ENCODE measurements at regions of chr11 and their contacts with region 1.

Region 1: GRCh38 chr11:72793425-72794367 is at the start of gene STARD10:
- DNase-seq: peak; percentile 97
- H3K4me3 ChIP-seq: peak within 1 kb of the TSS; percentile 44 to 68 (median 64)
- H3K27ac ChIP-seq: peak within 1 kb of the TSS; percentile 88 to 95 (median 90)
- H3K4me1 ChIP-seq: peaks cover 0 to 23% (median 19%) of the 10 kb centered on the region in 4 donors
- H3K27me3 ChIP-seq: no peaks in the 10 kb centered on the region
- CTCF ChIP-seq: peak; percentile 91 to 100 (median 100)
- EP300 ChIP-seq: peak in 1 of 4 donors; percentile 82
- POLR2A ChIP-seq: peak in 1 of 2 donors; percentile 7
- total RNA-seq, gene STARD10: 29.9 to 60.1 (median 43.9) TPM

Region 2: GRCh38 chr11:72585762-72586311 is 207.9 kb before region 1 on chr11:
- intact Hi-C with region 1: loop called (anchors 10 kb)
- DNase-seq: peak; percentile 85
- H3K4me3 ChIP-seq: no peak overlapping the region
- H3K27ac ChIP-seq: no peak overlapping the region
- H3K4me1 ChIP-seq: peaks cover 0 to 17% (median 8%) of the 10 kb centered on the region in 4 donors
- H3K27me3 ChIP-seq: no peaks in the 10 kb centered on the region
- CTCF ChIP-seq: peak; percentile 87 to 94 (median 90)
- EP300 ChIP-seq: no peak
- POLR2A ChIP-seq: no peak

Region 3: DNA sequence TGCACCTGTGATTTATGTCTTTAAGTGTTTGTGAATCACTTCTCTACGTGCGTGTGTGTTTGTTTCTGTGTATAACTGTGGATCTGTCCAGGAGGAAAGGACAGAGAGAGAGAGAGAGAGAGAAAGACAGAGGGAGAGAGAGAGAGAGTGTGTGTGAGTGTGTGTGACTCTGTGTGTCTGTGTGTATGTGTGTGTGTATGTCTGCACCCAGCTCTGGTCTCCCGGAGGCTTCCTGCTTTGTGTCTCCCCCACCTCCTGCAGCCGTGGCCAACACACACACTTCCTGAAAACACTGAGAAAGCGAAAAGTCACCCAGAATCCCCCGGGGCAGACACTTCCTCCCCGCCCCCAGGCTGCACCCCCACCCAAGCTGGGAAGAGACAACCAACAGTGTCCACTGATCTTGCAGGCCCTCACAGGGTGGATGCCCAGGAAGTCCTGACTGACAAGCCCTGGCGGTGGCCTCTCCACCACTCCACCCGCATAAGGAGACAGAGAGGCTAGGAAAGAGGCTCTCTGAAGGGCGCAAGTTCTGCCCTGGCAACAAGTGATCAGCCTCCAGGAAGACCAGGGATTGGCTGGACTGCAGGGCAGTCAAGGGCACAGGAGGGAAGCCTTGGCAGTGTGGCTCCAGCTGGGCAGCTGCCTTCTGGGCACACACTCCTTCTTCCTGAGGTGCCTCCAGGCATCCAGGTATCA is 71.5 kb before region 1 on chr11:
- intact Hi-C with region 1: loop called (anchors 1 kb)
- DNase-seq: peak; percentile 93
- H3K4me3 ChIP-seq: peak overlapping the region; percentile 56 to 82 (median 62)
- H3K27ac ChIP-seq: peak overlapping the region; percentile 83 to 89 (median 88)
- H3K4me1 ChIP-seq: peaks cover 0 to 67% (median 53%) of the 10 kb centered on the region in 4 donors
- H3K27me3 ChIP-seq: no peaks in the 10 kb centered on the region
- CTCF ChIP-seq: no peak
- EP300 ChIP-seq: no peak
- POLR2A ChIP-seq: no peak

Region 4: DNA sequence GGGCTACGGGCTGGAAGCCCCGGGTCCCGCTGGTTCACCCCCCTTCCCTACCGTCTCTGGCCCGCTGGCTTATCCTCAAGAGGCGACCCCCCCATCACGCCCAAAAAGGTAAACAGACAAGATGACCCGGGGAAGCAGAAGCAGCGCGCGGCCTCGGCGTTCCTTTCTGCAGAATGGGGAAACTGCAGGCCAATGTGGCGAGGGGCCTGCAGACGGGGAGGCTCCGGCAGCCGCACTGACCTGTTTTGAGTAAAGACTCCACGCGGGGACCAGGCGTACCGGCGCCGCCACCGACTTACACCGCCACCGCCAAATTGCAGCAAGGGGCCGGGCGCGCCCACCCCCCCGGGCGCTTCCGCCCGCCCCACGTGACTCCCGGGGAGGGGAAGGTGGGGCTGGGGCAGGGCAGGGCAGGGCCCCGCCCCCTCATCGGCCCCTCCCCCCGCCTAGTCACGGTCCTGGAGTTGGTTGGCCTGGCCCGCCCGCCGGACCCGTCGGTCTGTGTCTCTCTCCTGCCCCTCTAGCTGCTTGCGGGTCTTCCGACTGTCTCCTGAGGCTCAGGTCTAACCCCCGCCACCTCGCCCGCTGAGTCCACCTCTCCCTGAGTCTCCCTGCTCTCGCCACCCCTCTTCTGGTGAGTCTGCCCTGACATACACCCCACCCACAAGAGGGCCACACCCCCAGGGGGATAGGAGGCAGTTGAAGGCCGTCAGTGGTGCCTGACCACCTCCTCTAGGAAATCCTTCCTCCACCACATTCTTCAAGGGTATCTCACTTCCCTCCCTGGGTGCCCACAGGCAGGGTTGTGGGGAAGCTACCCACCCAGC is 41.4 kb before region 1 on chr11 and contains the start of gene ARAP1:
- intact Hi-C with region 1: loop called (anchors 2 kb)
- DNase-seq: peak; percentile 88
- H3K4me3 ChIP-seq: peak within 1 kb of the TSS; percentile 64 to 77 (median 70)
- H3K27ac ChIP-seq: peak within 1 kb of the TSS; percentile 20 to 68 (median 64)
- H3K4me1 ChIP-seq: peaks cover 0 to 41% (median 27%) of the 10 kb centered on the region in 4 donors
- H3K27me3 ChIP-seq: no peaks in the 10 kb centered on the region
- CTCF ChIP-seq: no peak
- EP300 ChIP-seq: no peak
- POLR2A ChIP-seq: no peak
- total RNA-seq, gene ARAP1: 56.5 to 135 (median 70.0) TPM

Region 5: DNA sequence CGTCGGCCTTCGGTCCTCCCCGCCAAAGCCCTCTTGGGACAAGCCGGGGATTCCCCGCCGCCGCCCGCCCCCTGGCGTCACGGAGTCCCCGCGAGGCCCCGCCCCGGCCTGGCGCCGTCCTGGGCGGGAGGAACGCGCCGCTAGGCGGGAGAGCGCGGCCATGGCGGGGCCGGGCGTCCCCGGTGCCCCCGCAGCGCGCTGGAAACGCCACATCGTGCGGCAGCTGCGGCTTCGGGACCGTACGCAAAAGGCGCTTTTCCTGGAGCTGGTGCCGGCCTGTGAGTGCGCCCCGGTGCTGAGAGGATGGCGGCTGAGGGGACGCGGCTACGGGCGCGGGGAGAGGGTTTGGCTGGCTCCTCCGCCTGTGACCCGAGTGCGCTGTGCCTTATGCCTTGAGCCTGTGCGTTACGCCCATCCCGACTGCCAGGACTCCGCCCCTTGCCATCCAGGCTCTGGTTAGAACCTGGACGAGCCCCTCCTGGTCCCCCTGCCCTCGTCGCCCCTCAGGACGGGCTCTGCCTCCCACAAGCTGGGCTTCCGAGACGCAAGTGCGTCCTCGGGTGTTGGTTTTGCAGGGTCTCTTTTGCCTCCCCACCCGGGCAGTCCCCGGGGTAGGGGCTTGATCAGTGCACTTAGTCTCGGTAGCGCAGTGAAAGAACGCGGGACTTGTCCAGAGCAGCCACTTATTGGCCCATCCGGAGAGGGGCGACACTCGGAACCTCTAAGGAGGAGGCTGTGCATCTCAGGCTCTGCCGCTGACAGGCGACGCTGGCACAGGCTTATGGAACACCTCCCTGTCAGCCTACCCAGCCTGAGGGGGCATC is 20.8 kb after region 1 on chr11 and contains the start of gene ATG16L2:
- intact Hi-C with region 1: loop called (anchors 2 kb)
- DNase-seq: peak; percentile 93
- H3K4me3 ChIP-seq: peak within 1 kb of the TSS; percentile 73 to 94 (median 84)
- H3K27ac ChIP-seq: peak within 1 kb of the TSS; percentile 87 to 93 (median 92)
- H3K4me1 ChIP-seq: peaks cover 0 to 39% (median 37%) of the 10 kb centered on the region in 4 donors
- H3K27me3 ChIP-seq: no peaks in the 10 kb centered on the region
- CTCF ChIP-seq: peak in 1 of 4 experiments; percentile 5
- EP300 ChIP-seq: no peak
- POLR2A ChIP-seq: peak; percentile 29 to 69
- total RNA-seq, gene ATG16L2: 16.8 to 36.8 (median 20.2) TPM